Endothelial cell of umbilical vein (primary cell): ENCODE measurements at regions of chr5 and their contacts with region 1.

Region 1: DNA sequence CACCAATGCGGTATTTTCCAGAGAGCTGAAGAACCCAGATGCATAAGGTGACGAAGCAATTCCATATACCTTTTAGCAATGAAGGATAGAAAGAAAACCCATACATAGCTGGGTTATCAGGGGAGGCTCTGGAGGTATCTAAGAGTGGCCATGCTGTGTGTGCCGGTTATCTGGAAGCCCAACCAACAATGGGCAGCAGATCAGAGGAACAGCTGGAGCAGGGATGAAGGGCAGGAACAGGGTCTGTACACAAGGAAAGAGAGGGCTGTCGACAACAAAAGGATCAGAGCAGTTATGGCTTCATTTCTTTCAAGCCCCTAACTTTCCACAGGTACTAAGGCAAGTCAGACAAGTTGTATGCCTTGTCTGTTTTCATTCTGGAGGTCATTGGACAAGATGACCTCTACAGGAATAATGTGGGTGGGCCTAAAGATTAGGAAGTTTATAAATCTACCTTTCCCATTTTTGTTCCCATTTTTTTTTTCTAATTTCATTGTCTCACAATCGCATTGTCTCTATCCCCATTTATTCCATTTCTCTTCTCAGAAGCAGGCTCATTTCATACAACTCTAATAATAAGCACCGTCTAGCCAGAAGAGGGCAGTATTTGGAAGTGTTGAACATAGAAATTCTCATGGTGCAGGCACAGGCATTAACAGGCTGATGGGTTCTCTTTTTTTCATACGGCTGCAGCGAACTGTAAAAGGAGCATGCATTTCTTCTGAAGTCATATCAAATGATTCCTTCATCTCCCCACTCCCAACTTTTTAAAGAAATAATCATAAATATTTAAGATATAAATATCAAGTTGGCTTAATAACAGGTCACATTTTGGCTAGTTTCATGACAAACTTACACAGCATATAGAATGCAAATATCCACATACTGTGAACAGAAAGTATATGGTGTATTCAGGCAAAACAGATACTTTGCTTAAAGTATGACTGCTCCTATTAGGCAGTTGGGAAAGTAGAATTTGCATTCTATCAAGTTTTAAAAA is 63.5 kb downstream of the ZNF474 start:
- DNase-seq: peak; percentile 76
- H3K4me3 ChIP-seq: no peak overlapping the region
- H3K27ac ChIP-seq: no peak overlapping the region
- H3K4me1 ChIP-seq: peaks cover 6% of the 10 kb centered on the region
- H3K27me3 ChIP-seq: peaks cover under 1 to 3% of the 10 kb centered on the region in 2 experiments
- CTCF ChIP-seq: peak; percentile 51 to 58
- POLR2A ChIP-seq: no peak

Region 2: DNA sequence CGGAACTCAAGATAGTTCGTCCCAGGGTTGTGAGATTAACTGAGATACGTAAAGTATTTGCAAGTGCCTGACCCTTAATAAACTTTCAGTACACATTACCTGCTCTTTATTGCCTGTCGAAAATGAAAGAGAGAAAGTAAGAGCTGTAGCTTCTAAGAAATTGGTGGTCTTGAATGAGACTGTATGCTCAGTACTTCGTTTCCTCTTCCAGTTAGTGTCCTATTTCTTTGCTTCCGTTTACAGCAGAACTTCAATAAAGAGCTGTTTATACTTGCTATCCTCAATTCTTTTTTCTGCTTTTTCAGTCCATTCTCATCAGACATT is 230.5 kb before region 1 on chr5:
- CTCF ChIA-PET with region 1: interaction called, 12 read pairs
- POLR2A ChIA-PET with region 1: no interaction called
- dilution Hi-C with region 1: no loop called
- intact Hi-C with region 1: no loop called
- DNase-seq: peak; percentile 42
- H3K4me3 ChIP-seq: peak overlapping the region; percentile 79 to 95 (median 88)
- H3K27ac ChIP-seq: peak overlapping the region; percentile 86
- H3K4me1 ChIP-seq: peaks cover 14% of the 10 kb centered on the region
- H3K27me3 ChIP-seq: peaks cover 4 to 5% of the 10 kb centered on the region in 2 experiments
- CTCF ChIP-seq: no peak
- POLR2A ChIP-seq: no peak

Region 3: DNA sequence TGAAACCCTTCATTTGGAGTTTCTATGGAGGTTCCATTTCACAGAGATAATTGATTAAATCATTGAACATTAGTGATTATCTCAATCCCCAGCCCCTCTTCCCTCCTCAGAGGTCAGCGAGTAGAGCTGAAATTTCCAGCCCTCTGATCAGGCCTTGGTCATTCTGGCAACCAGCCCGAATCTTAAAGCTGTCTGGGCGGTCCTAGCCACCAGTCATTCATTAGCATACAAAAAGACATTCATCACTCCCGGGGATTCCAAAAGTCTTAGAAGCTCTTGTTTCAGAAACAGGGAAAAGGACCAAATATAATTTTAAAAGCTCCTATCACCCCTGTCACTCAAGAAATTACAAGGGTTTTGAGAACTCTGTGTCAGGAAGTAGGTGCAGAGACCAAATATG is 22.2 kb before region 1 on chr5:
- CTCF ChIA-PET with region 1: interaction called, 12 read pairs
- POLR2A ChIA-PET with region 1: no interaction called
- dilution Hi-C with region 1: no loop called
- intact Hi-C with region 1: no loop called
- DNase-seq: peak; percentile 15
- H3K4me3 ChIP-seq: no peak overlapping the region
- H3K27ac ChIP-seq: no peak overlapping the region
- H3K4me1 ChIP-seq: no peaks in the 10 kb centered on the region
- H3K27me3 ChIP-seq: no peaks in the 10 kb centered on the region
- CTCF ChIP-seq: no peak
- POLR2A ChIP-seq: no peak

Region 4: GRCh38 chr5:122182491-122182921 is 10.3 kb before region 1 on chr5:
- CTCF ChIA-PET with region 1: interaction called, 15 read pairs
- POLR2A ChIA-PET with region 1: no interaction called
- dilution Hi-C with region 1: no loop called
- intact Hi-C with region 1: no loop called
- DNase-seq: peak; percentile 93
- H3K4me3 ChIP-seq: peak overlapping the region in 1 of 3 experiments; percentile 57
- H3K27ac ChIP-seq: peak overlapping the region; percentile 84
- H3K4me1 ChIP-seq: peaks cover 41% of the 10 kb centered on the region
- H3K27me3 ChIP-seq: no peaks in the 10 kb centered on the region
- CTCF ChIP-seq: no peak
- POLR2A ChIP-seq: no peak

Region 5: DNA sequence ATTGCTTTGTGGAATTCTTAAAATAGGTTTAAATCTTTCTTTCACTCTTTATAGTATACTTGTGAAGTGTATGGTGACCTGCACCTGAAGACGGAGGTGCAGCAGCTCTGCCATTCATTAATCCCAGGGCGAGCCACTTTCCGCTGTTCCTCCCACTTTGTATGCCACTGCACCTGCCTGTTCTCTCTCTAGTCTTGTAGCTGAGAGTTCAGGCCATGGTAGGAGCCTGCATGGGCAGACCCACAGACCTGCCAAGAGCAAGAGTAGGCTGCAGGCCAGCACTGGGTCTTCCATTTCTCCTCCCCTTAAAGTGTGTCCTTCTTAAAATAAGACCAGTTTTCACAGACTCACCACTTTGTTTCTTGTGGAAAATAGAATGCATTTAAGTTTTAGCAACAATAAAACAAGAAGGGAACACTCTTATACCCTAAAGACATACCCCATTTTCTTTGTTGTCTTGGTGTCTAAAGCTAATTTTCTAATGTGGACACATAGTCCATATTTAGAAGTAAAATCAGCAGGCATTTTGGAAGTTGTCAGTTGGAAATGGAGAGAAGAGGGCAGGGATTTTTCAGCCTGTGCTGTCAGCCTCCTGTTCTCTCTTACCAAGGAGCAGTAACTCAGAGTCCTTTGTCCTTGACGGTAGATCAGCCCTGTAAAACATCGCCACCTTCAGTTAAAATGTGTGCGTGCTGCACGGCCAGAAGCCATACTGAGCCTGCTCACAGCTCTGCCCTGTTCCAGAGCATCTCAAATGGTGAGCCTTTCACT is 222.4 kb after region 1 on chr5:
- CTCF ChIA-PET with region 1: interaction called, 138 read pairs
- POLR2A ChIA-PET with region 1: no interaction called
- dilution Hi-C with region 1: no loop called
- intact Hi-C with region 1: loop called (anchors 1 kb)
- DNase-seq: peak; percentile 74
- H3K4me3 ChIP-seq: no peak overlapping the region
- H3K27ac ChIP-seq: no peak overlapping the region
- H3K4me1 ChIP-seq: no peaks in the 10 kb centered on the region
- H3K27me3 ChIP-seq: no peaks in the 10 kb centered on the region
- CTCF ChIP-seq: peak; percentile 62 to 69
- POLR2A ChIP-seq: no peak

Region 6: GRCh38 chr5:123344816-123345426 is 1152.1 kb after region 1 on chr5:
- CTCF ChIA-PET with region 1: no interaction called
- POLR2A ChIA-PET with region 1: no interaction called
- dilution Hi-C with region 1: no loop called
- intact Hi-C with region 1: loop called (anchors 10 kb)
- DNase-seq: peak; percentile 45
- H3K4me3 ChIP-seq: no peak overlapping the region
- H3K27ac ChIP-seq: no peak overlapping the region
- H3K4me1 ChIP-seq: no peaks in the 10 kb centered on the region
- H3K27me3 ChIP-seq: no peaks in the 10 kb centered on the region
- CTCF ChIP-seq: peak; percentile 34 to 55
- POLR2A ChIP-seq: no peak